ENCODE measurements at regions of chr3 and their contacts with region 1.

Region 1: DNA sequence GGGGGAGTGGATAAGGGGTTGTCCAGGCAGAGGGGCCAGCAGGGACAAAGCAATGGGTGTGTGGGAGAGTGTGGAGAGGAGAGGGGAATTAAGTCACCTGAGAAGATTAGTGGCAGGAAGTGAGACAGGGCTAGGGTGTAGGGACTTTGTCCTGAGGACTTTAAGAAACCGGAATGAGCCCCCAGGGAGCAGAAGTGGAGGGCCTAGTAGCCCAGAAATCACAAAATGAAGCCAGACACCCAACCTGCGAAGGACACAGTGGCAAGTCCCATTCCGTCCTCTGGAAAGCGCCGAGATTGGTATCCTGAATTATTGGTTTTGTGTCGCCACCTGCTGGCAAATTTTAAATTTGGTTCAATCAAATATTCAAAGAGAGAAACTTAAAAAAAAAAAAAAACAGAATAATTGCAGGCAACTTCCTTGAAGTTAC is 78.0 kb upstream of the SLC25A36 start:
- DNase-seq: peak; percentile 47 to 53
- H3K4me3 ChIP-seq: no peak overlapping the region
- H3K27ac ChIP-seq: no peak overlapping the region
- H3K4me1 ChIP-seq: no peaks in the 10 kb centered on the region
- H3K27me3 ChIP-seq: no peaks in the 10 kb centered on the region
- CTCF ChIP-seq: peak; percentile 75

Region 2: GRCh38 chr3:140128631-140129030 is 735.0 kb before region 1 on chr3:
- CTCF ChIA-PET with region 1: no interaction called
- POLR2A ChIA-PET with region 1: no interaction called
- intact Hi-C with region 1: loop called (anchors 10 kb)
- DNase-seq: peak in 1 of 2 experiments; percentile 29
- H3K4me3 ChIP-seq: no peak overlapping the region
- H3K27ac ChIP-seq: no peak overlapping the region
- H3K4me1 ChIP-seq: no peaks in the 10 kb centered on the region
- H3K27me3 ChIP-seq: no peaks in the 10 kb centered on the region
- CTCF ChIP-seq: peak; percentile 69

Region 3: DNA sequence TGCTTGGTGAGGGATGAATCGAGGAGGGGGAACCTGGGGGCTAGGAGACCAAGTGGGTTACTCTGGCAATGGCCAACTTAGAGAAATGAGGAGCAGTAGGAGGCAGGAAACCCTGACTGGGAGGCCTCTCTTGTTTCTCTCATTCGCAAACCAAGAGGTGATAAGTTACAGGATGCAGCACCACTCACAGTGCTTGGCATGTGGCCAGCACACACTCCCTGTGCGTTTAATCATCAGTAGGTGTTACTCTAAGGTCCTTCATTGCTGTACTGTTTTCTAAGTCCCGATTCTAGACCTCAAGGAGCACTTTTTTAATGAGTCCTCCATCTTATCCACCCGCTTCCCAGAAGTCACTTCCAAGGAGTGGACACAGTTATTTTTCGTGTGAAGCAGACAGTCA is 499.8 kb before region 1 on chr3:
- CTCF ChIA-PET with region 1: no interaction called
- POLR2A ChIA-PET with region 1: no interaction called
- intact Hi-C with region 1: loop called (anchors 5 kb)
- DNase-seq: peak in 1 of 2 experiments; percentile 11
- H3K4me3 ChIP-seq: no peak overlapping the region
- H3K27ac ChIP-seq: no peak overlapping the region
- H3K4me1 ChIP-seq: no peaks in the 10 kb centered on the region
- H3K27me3 ChIP-seq: no peaks in the 10 kb centered on the region
- CTCF ChIP-seq: no peak